CD4-positive, alpha-beta memory T cell (primary cell): ENCODE measurements at regions of chr3 and their contacts with region 1.

Region 1: GRCh38 chr3:50227390-50228183 is 8.4 kb upstream of the GNAI2 start:
- DNase-seq: peak; percentile 90 to 92 (median 91)
- H3K4me3 ChIP-seq: peak overlapping the region; percentile 79 to 87
- H3K4me3 Mint-ChIP-seq: peak overlapping the region; percentile 89 to 99 (median 94)
- H3K27ac ChIP-seq: peak overlapping the region; percentile 59
- H3K27ac Mint-ChIP-seq: peak overlapping the region; percentile 92 to 96 (median 95)
- H3K4me1 ChIP-seq: peaks cover 18% of the 10 kb centered on the region
- H3K4me1 Mint-ChIP-seq: peaks cover 15 to 39% (median 30%) of the 10 kb centered on the region in 4 donors
- H3K27me3 ChIP-seq: no peaks in the 10 kb centered on the region
- H3K27me3 Mint-ChIP-seq: peaks cover 0 to 2% of the 10 kb centered on the region in 2 donors

Region 2: DNA sequence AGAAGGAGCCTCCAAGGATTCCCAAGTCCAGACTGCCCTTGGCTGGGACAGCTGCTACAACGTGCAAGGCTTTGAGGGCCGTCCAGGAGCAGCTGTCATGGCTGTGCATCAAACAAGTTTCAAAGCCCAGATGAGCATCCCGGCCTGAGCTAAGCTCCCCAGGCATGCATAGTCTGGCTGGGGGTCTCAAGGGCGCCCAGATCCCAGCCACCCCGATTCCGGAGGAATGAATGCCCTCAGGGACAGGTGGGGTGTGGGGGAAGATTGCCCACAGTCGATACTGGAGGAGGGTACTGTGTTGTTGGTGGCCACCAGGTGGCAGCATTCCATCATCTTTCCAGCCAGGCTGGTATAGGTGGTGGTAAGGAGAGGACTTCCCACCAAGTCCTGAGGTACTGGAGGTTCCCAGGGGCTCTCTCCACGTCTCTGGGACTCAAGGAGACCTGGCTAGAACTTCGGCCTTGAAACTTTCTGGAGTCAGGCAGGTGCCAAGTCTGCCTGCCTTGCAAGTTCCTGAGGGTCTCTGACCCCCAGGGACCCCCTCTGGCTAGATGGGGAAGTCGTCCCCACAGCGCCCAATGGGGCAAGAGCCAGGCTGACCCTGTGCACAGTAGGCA is 106.1 kb before region 1 on chr3:
- CTCF ChIA-PET with region 1: interaction called, 11 read pairs
- POLR2A ChIA-PET with region 1: interaction called, 7 read pairs
- intact Hi-C with region 1: loop called (anchors 1 kb)
- DNase-seq: peak; percentile 56 to 69 (median 62)
- H3K4me3 ChIP-seq: no peak overlapping the region
- H3K4me3 Mint-ChIP-seq: no peak overlapping the region
- H3K27ac ChIP-seq: no peak overlapping the region
- H3K27ac Mint-ChIP-seq: peak overlapping the region in 4 of 7 donors; percentile 1 to 73 (median 65)
- H3K4me1 ChIP-seq: no peaks in the 10 kb centered on the region
- H3K4me1 Mint-ChIP-seq: peaks cover 0 to 11% (median 3%) of the 10 kb centered on the region in 4 donors
- H3K27me3 ChIP-seq: no peaks in the 10 kb centered on the region
- H3K27me3 Mint-ChIP-seq: no peaks in the 10 kb centered on the region

Region 3: DNA sequence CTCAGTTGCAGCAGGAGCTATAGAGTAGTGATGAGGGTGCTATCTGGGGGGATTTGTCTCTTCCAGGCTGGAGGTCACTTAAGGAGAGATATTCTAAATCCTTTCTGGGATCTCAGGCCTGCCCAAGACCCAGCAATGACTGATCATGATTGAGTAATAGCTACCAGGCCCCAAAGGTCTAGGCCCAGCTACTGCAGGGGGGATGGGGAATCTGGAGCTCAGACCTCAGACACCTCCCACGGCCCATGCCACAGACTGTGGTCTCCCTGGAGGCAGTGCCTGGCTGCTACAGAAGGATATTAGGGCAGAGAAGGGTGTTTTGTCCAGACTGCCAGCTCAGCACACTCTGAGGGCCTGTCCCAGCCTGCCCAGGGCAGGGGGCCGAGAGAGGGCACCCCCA is 15.7 kb before region 1 on chr3:
- CTCF ChIA-PET with region 1: interaction called, 17 read pairs
- POLR2A ChIA-PET with region 1: interaction called, 3 read pairs
- intact Hi-C with region 1: no loop called
- DNase-seq: no peak
- H3K4me3 ChIP-seq: no peak overlapping the region
- H3K4me3 Mint-ChIP-seq: no peak overlapping the region
- H3K27ac ChIP-seq: no peak overlapping the region
- H3K27ac Mint-ChIP-seq: peak overlapping the region in 1 of 7 donors; percentile 4
- H3K4me1 ChIP-seq: no peaks in the 10 kb centered on the region
- H3K4me1 Mint-ChIP-seq: no peaks in the 10 kb centered on the region
- H3K27me3 ChIP-seq: no peaks in the 10 kb centered on the region
- H3K27me3 Mint-ChIP-seq: peaks cover 4 to 5% of the 10 kb centered on the region in 2 donors

Region 4: GRCh38 chr3:50260027-50260941 is 32.7 kb after region 1 on chr3:
- CTCF ChIA-PET with region 1: interaction called, 14 read pairs
- POLR2A ChIA-PET with region 1: interaction called, 5 read pairs
- intact Hi-C with region 1: loop called (anchors 1 kb)
- DNase-seq: peak; percentile 76 to 82 (median 79)
- H3K4me3 ChIP-seq: peak overlapping the region in 1 of 2 donors; percentile 24
- H3K4me3 Mint-ChIP-seq: peak overlapping the region; percentile 36 to 83 (median 68)
- H3K27ac ChIP-seq: peak overlapping the region; percentile 46
- H3K27ac Mint-ChIP-seq: peak overlapping the region in 5 of 7 donors; percentile 48 to 91 (median 81)
- H3K4me1 ChIP-seq: peaks cover 13% of the 10 kb centered on the region
- H3K4me1 Mint-ChIP-seq: peaks cover 3 to 9% (median 4%) of the 10 kb centered on the region in 4 donors
- H3K27me3 ChIP-seq: no peaks in the 10 kb centered on the region
- H3K27me3 Mint-ChIP-seq: no peaks in the 10 kb centered on the region

Region 5: DNA sequence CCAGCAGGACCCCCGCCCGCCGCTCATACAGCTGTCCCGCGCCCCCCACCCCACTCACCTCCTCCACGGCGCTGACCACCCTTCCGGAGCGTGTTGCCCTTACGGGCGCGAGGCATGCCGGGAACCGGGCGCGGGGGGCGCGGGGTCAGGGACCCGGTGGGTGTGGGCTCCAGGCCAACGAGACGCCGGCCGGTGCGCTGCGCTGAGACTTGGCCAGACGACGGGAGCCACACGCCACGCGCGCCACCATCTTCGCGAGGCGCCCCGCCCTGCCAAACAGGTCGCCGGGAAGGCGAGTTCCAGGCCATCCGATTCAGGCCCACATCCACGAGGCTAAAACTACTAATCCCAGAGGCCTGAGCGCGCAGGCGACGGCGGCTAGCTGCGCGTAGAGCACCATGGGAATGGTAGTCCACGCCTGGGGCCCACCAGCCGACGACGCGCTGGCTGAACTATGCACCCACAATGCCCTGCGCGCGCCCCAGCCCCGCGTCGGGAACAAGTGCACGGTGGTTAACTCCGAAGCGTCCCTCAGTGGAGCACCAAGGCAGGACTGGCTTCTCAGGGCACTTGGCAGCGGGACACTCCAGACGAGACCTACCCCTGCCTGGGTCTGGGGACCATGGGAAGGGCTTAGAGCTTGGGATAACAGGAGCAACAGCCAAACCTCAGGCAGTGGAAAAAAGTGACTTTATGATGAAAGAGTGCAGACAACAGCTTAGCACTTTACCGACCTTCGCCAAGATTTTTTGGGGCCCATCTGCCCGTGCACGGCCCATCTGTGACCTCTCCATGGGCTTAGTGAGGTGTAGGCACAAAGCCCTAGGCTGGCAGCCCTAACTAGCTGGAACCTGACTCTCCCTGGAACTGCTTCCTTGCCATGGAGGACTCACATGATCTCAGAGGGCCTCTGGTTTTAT is 64.8 kb after region 1 on chr3 and contains the start of gene IFRD2:
- CTCF ChIA-PET with region 1: interaction called, 3 read pairs
- POLR2A ChIA-PET with region 1: interaction called, 10 read pairs
- intact Hi-C with region 1: no loop called
- DNase-seq: peak; percentile 94 to 98 (median 95)
- H3K4me3 ChIP-seq: peak within 1 kb of the TSS; percentile 76
- H3K4me3 Mint-ChIP-seq: peak within 1 kb of the TSS; percentile 82 to 92 (median 88)
- H3K27ac ChIP-seq: peak within 1 kb of the TSS; percentile 68
- H3K27ac Mint-ChIP-seq: peak within 1 kb of the TSS; percentile 90 to 99 (median 98)
- H3K4me1 ChIP-seq: peaks cover 24% of the 10 kb centered on the region
- H3K4me1 Mint-ChIP-seq: peaks cover 12 to 39% (median 22%) of the 10 kb centered on the region in 4 donors
- H3K27me3 ChIP-seq: no peaks in the 10 kb centered on the region
- H3K27me3 Mint-ChIP-seq: no peaks in the 10 kb centered on the region
- total RNA-seq, gene IFRD2: 58.6 to 65.3 TPM

Region 6: DNA sequence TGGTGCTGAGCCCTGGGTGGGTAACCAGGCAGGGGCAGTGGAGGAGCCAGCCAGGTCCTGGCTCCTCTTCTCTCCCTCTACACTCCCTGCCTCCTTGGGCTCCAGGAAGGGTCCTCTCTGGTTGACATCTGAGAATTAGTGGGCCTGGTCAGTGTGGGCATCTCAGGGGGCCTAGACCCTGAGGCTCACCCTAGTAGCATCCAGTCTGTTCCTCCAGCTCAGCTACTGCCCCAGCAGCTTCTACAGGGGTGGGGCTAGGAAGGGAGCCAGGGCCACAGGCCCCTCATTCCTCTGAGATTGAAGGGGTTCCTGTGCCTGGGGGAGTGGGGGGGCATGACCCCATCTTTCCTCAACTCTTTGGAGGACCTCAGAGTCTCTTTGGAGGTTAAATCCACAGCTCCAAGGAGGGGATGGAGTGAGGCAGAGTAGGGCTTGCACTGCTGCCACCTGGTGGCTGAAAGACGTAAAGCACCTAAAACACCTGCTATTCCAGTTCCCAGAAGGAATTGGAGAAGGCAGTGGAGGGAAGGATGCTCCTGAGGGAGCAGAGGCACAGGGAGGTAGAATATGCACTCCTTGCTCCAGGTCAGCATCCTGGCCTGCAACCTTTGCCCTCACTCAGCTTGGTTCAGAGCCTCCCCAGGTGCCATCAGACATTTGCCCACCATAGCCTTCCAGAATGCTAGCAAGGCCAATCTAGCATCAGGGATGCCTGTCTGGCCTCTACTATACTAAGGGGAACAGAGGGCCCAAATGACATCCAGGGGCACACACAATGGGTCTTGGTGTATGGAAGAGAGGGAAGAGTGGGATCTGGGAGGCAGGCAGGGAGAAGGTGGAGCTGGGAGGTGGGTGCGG is 314.8 kb after region 1 on chr3:
- CTCF ChIA-PET with region 1: no interaction called
- POLR2A ChIA-PET with region 1: no interaction called
- intact Hi-C with region 1: no loop called
- DNase-seq: peak; percentile 48 to 65 (median 52)
- H3K4me3 ChIP-seq: no peak overlapping the region
- H3K4me3 Mint-ChIP-seq: peak overlapping the region in 1 of 8 donors; percentile 15
- H3K27ac ChIP-seq: no peak overlapping the region
- H3K27ac Mint-ChIP-seq: no peak overlapping the region
- H3K4me1 ChIP-seq: no peaks in the 10 kb centered on the region
- H3K4me1 Mint-ChIP-seq: no peaks in the 10 kb centered on the region
- H3K27me3 ChIP-seq: no peaks in the 10 kb centered on the region
- H3K27me3 Mint-ChIP-seq: peaks cover 3% of the 10 kb centered on the region in 2 donors